OCI-LY7 (cell line): ENCODE measurements at regions of chr6 and their contacts with region 1.

Region 1: DNA sequence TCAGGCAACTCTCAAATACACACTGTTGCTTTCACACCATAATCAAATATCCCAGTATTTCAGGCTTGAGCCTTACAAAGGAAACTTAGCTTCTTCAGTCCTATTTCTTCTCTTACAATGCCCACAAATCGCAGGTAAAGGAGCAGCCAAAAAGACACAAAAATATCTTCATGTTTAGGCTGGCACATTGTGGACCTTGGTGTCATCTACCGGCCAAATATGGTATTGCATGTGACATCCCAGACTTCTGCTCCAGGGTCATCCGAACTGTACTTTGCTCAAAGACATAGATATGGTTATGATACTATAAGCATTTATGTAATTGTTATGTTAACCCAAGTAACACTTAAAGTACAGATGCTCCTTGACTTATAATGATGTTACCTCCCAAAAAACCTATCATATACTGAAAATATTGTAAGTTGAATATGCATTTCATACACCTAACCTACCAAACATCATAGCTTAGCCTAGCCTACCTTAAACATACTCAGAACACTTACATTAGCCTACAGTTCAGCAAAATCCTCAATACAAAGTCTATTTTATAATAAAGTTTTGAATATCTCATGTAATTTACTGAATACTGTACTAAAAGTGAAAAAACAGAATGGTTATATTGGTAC is 4.6 kb downstream of the OR2H2 start:
- DNase-seq: peak; percentile 64
- H3K4me3 ChIP-seq: no peak overlapping the region
- H3K27ac ChIP-seq: no peak overlapping the region
- H3K4me1 ChIP-seq: peaks cover 12% of the 10 kb centered on the region
- CTCF ChIP-seq: peak; percentile 96

Region 2: DNA sequence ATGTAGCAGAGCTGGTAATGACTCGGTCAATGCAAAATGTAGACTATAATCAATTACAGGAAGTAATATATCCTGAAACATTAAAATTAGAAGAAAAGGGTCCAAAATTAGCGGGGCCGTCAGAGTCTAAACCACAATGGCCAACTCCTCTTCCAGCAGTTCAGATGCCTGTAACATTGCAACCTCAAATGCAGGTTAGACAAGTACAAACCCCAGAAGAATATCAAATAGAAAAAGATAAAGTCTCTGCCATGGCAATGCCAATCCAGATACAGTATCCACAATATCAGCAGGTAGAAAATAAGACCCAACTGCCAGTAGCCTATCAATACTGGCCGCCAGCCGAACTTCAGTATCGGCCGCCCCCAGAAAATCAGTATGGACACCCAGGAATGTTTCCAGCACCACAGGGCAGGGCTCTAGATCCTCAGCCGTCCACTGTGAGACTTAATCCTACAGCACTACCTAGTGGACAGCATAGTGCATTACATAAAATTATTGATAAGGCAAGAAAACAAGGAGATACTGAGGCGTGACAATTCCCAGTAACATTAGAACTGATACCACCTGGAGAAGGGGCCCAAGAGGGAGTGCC is 905.5 kb before region 1 on chr6:
- CTCF ChIA-PET with region 1: no interaction called
- POLR2A ChIA-PET with region 1: no interaction called
- intact Hi-C with region 1: loop called (anchors 10 kb)
- DNase-seq: peak; percentile 65
- H3K4me3 ChIP-seq: no peak overlapping the region
- H3K27ac ChIP-seq: no peak overlapping the region
- H3K4me1 ChIP-seq: peaks cover 3% of the 10 kb centered on the region
- CTCF ChIP-seq: peak; percentile 85

Region 3: GRCh38 chr6:29016559-29017427 is 572.7 kb before region 1 on chr6:
- CTCF ChIA-PET with region 1: no interaction called
- POLR2A ChIA-PET with region 1: no interaction called
- intact Hi-C with region 1: loop called (anchors 10 kb)
- DNase-seq: peak; percentile 90
- H3K4me3 ChIP-seq: peak overlapping the region; percentile 67
- H3K27ac ChIP-seq: peak overlapping the region; percentile 56
- H3K4me1 ChIP-seq: no peaks in the 10 kb centered on the region
- CTCF ChIP-seq: peak; percentile 97

Region 4: GRCh38 chr6:29251741-29252140 is 337.8 kb before region 1 on chr6:
- CTCF ChIA-PET with region 1: no interaction called
- POLR2A ChIA-PET with region 1: no interaction called
- intact Hi-C with region 1: no loop called
- DNase-seq: no peak
- H3K4me3 ChIP-seq: no peak overlapping the region
- H3K27ac ChIP-seq: no peak overlapping the region
- H3K4me1 ChIP-seq: no peaks in the 10 kb centered on the region
- CTCF ChIP-seq: no peak

Region 5: DNA sequence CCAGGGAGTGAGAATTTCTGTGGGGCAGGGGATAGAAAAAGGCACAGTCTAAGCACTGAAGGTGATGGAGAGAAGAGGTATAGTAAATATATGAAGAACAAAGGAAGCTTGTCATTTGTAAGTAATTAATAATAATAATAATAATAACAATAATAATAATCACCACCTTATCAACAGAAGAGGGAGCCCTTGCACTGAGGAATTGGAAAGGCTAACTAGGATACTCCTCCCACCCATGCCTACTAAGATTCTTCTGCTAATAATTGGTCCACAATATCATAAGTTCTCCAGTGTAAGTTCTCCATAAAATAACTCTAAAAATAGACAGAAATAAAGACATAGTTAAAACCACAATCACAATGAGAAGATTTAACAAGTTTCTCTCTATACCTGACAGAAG is 213.5 kb before region 1 on chr6:
- CTCF ChIA-PET with region 1: no interaction called
- POLR2A ChIA-PET with region 1: no interaction called
- intact Hi-C with region 1: loop called (anchors 1 kb)
- DNase-seq: no peak
- H3K4me3 ChIP-seq: no peak overlapping the region
- H3K27ac ChIP-seq: no peak overlapping the region
- H3K4me1 ChIP-seq: no peaks in the 10 kb centered on the region
- CTCF ChIP-seq: no peak; the same call in 1 of the 2 replicates

Region 6: GRCh38 chr6:30013291-30013922 is 423.9 kb after region 1 on chr6:
- CTCF ChIA-PET with region 1: no interaction called
- POLR2A ChIA-PET with region 1: no interaction called
- intact Hi-C with region 1: no loop called
- DNase-seq: peak; percentile 51
- H3K4me3 ChIP-seq: no peak overlapping the region
- H3K27ac ChIP-seq: no peak overlapping the region
- H3K4me1 ChIP-seq: no peaks in the 10 kb centered on the region
- CTCF ChIP-seq: peak; percentile 94